Activated naive CD4-positive, alpha-beta T cell treated with anti-CD3 and anti-CD28 coated beads for 36 hours (primary cell): ENCODE measurements at regions of chr19 and their contacts with region 1.

Region 1: DNA sequence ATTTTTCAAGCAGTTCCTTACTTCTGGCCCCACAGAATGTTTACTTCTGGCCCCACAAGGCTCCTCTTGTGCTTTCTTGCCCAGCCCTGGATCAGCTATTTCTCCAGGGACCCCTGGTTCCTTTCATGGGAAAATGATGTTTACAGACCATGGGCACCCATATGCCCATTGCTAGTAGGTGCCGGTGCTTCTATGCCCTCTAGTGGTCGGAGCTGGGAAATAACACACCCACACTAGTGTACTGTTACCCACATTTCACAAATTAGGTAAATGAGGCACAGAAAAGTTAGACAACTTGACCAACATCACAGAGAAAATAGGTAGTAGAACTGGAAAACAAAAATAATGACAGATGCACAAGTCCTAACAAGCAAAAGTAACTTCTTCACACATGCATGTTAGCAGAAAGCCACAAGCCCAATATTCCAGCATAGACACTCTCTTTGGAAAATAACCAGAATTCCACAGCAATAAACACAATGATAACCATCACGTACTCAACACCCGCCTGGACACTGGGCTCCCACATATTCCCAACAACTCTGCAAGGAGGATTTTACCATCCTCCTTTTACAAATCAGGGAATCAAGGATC is 1.3 kb upstream of the CEACAM6 start:
- DNase-seq: peak; percentile 85
- H3K4me3 Mint-ChIP-seq: no peak overlapping the region
- H3K27ac Mint-ChIP-seq: no peak overlapping the region
- H3K4me1 Mint-ChIP-seq: peaks cover 6% of the 10 kb centered on the region
- H3K27me3 Mint-ChIP-seq: peaks cover 22% of the 10 kb centered on the region

Region 2: DNA sequence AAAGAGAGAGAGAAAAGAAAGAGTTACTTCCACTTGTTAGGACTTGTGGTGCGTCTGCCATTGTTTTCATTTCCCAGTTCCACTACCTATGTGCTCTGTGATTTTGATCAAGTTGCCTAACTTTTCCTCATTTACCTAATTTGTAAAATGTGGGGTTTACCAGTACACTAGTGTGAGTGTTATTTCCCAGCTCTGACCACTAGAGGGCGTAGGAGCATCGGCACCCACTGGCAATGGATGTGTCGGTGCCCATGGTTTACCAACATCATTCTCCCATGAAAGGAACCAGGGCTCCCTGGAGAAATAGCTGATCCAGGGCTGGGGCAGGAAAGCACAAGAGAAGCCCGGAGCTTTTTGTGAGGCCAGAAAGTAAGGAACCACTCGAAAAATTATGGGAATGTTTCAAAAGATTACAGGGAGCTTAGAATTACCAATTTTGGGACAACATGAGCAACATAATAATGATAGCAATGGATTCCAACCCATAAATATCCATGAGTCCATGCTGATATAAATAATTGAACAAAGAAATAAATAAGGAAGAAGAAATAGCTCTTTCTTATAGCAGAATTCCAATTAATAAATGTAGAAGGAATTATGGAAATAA is 112.1 kb before region 1 on chr19:
- CTCF ChIA-PET with region 1: interaction called, 14 read pairs
- intact Hi-C with region 1: loop called (anchors 5 kb)
- DNase-seq: peak; percentile 85
- H3K4me3 Mint-ChIP-seq: no peak overlapping the region
- H3K27ac Mint-ChIP-seq: no peak overlapping the region
- H3K4me1 Mint-ChIP-seq: peaks cover 29% of the 10 kb centered on the region
- H3K27me3 Mint-ChIP-seq: peaks cover 1% of the 10 kb centered on the region

Region 3: GRCh38 chr19:41726493-41726892 is 27.5 kb before region 1 on chr19:
- CTCF ChIA-PET with region 1: interaction called, 14 read pairs
- intact Hi-C with region 1: no loop called
- DNase-seq: no peak
- H3K4me3 Mint-ChIP-seq: no peak overlapping the region
- H3K27ac Mint-ChIP-seq: no peak overlapping the region
- H3K4me1 Mint-ChIP-seq: no peaks in the 10 kb centered on the region
- H3K27me3 Mint-ChIP-seq: peaks cover 23% of the 10 kb centered on the region

Region 4: GRCh38 chr19:41775360-41775695 is 21.3 kb after region 1 on chr19:
- CTCF ChIA-PET with region 1: interaction called, 67 read pairs
- intact Hi-C with region 1: no loop called
- DNase-seq: no peak
- H3K4me3 Mint-ChIP-seq: no peak overlapping the region
- H3K27ac Mint-ChIP-seq: no peak overlapping the region
- H3K4me1 Mint-ChIP-seq: peaks cover 36% of the 10 kb centered on the region
- H3K27me3 Mint-ChIP-seq: peaks cover 73% of the 10 kb centered on the region

Region 5: GRCh38 chr19:41795031-41795461 is 41.0 kb after region 1 on chr19:
- CTCF ChIA-PET with region 1: interaction called, 82 read pairs
- intact Hi-C with region 1: no loop called
- DNase-seq: peak; percentile 81
- H3K4me3 Mint-ChIP-seq: no peak overlapping the region
- H3K27ac Mint-ChIP-seq: no peak overlapping the region
- H3K4me1 Mint-ChIP-seq: no peaks in the 10 kb centered on the region
- H3K27me3 Mint-ChIP-seq: peaks cover 18% of the 10 kb centered on the region

Region 6: GRCh38 chr19:41837981-41838708 is 84.1 kb after region 1 on chr19:
- CTCF ChIA-PET with region 1: interaction called, 21 read pairs
- intact Hi-C with region 1: no loop called
- DNase-seq: no peak
- H3K4me3 Mint-ChIP-seq: no peak overlapping the region
- H3K27ac Mint-ChIP-seq: no peak overlapping the region
- H3K4me1 Mint-ChIP-seq: no peaks in the 10 kb centered on the region
- H3K27me3 Mint-ChIP-seq: peaks cover 3% of the 10 kb centered on the region